ENCODE measurements at regions of chr5 and their contacts with region 1.

Region 1: DNA sequence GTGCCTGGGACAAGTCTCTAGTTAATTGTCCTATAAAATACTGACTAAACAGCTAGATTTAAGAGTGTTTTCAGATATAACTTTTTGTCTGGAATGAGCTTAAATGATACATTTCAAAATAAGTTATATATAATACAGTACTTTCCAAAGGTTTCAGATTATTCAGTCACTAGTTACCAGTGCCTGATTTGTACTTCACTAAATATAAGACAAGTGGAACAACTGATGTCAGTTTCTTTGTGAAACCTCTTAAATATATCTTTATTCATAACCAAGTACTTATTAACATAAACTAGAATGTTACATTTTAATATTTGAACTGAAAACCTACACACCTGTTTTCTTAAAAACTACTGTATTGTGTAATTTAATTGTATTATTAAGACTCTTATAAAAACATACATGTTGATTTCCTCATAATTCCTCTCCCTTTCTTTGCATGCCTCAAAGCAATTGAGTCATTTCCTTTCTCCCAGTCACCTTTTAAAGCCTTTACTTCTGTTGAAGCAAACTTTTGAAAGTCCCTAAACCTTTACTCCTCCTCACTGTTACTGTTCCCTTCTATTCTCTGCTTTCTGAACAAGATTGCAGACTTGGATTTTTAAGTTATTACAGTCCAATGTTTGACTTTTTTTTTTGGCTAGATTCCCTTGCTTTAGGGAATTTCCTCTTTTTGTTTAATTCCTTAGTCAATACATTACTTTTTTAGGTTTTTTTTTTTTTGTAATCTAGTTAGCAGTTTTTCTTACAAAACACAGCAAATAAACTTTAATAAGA is 8.7 kb upstream of the SEMA6A start:
- DNase-seq: no peak
- ATAC-seq: no peak
- H3K4me3 ChIP-seq: no peak overlapping the region
- H3K27ac ChIP-seq: peak overlapping the region in 2 of 4 donors; percentile 17 to 23
- H3K4me1 ChIP-seq: peaks cover 0 to 2% (median 0%) of the 10 kb centered on the region in 3 donors
- H3K27me3 ChIP-seq: no peaks in the 10 kb centered on the region
- CTCF ChIP-seq: no peak

Region 2: DNA sequence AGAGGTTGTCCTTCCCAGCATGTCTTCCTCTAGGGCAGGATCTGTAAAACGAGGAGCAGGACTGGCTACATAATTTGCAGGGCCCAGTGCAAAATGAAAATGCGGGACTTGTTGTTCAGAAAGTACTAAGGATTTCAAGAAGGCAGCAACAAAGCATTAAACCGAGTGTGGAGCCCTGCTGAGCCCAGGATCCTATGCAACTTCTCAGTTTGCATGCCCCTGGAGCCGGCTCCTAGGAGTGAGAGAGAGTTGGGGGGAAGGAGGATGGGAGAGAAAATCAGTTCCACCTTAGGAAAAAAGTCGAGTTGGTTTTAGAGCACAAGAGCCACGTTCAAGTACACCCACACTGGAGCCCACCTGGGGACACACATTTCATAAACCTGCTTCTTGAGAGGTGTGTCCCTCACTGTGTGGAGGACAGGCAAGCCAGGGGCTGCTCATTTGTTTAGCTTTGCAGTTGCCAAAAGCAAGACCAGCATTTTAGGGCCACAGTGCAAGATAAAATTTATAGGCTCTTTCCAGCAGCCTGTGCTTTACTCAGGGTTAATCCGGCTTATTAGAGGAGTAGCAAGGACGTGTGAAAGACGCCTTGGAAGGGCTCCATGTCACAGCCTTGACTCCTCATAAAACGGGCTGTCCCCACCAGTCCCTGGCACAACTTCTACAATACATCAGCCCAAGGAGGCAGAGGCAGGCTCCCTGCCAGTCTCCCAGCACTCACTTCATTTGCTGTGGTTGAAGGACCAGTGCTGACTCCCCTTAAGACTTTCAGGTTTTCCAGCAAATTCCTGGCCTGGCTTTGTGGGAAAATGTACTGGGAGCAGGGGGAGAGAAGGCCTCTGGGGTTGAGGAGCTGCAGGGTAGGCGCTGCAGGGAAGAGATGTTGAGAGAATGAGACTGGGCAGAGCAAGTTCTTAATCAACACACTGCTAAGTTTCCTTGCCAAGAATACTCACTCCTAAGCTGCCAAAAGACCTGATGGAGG is 151.0 kb after region 1 on chr5:
- intact Hi-C with region 1: no loop called
- DNase-seq: no peak
- ATAC-seq: no peak
- H3K4me3 ChIP-seq: no peak overlapping the region
- H3K27ac ChIP-seq: no peak overlapping the region
- H3K4me1 ChIP-seq: no peaks in the 10 kb centered on the region
- H3K27me3 ChIP-seq: no peaks in the 10 kb centered on the region
- CTCF ChIP-seq: no peak

Region 3: GRCh38 chr5:116814626-116815385 is 231.5 kb after region 1 on chr5:
- intact Hi-C with region 1: no loop called
- DNase-seq: no peak
- ATAC-seq: peak in 1 of 4 donors; percentile 46
- H3K4me3 ChIP-seq: no peak overlapping the region
- H3K27ac ChIP-seq: no peak overlapping the region
- H3K4me1 ChIP-seq: no peaks in the 10 kb centered on the region
- H3K27me3 ChIP-seq: no peaks in the 10 kb centered on the region
- CTCF ChIP-seq: no peak

Region 4: DNA sequence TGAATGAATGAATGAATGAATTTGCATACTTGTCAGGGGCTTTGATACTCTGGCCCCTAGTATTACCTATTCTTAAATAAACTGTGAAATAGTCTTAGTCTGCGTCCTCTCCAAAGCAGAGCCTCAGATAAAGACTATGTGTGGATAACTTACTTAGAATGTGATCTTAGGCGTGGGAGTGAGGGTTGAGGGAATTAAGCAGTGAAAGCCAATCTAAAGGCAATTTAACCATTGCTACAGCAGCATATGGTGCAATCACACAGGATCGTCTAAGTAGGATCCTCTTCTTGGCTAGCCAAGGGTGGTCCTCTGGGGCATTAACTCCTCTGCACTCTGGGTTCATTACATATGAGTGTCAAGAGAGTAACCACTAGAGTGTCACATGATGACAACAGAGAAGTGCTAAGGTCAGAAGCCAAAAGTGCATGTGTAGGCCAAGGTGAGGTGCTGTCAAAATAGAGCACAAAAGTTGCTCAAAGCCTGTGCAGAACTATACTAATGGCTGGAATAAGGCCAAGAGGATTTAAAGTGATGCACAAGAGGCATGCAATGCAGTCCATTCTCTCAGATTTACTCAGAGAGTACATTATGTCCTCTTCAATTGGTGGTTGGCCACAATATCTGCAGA is 265.8 kb after region 1 on chr5:
- intact Hi-C with region 1: no loop called
- DNase-seq: no peak
- ATAC-seq: no peak
- H3K4me3 ChIP-seq: no peak overlapping the region
- H3K27ac ChIP-seq: no peak overlapping the region
- H3K4me1 ChIP-seq: no peaks in the 10 kb centered on the region
- H3K27me3 ChIP-seq: no peaks in the 10 kb centered on the region
- CTCF ChIP-seq: no peak

Region 5: DNA sequence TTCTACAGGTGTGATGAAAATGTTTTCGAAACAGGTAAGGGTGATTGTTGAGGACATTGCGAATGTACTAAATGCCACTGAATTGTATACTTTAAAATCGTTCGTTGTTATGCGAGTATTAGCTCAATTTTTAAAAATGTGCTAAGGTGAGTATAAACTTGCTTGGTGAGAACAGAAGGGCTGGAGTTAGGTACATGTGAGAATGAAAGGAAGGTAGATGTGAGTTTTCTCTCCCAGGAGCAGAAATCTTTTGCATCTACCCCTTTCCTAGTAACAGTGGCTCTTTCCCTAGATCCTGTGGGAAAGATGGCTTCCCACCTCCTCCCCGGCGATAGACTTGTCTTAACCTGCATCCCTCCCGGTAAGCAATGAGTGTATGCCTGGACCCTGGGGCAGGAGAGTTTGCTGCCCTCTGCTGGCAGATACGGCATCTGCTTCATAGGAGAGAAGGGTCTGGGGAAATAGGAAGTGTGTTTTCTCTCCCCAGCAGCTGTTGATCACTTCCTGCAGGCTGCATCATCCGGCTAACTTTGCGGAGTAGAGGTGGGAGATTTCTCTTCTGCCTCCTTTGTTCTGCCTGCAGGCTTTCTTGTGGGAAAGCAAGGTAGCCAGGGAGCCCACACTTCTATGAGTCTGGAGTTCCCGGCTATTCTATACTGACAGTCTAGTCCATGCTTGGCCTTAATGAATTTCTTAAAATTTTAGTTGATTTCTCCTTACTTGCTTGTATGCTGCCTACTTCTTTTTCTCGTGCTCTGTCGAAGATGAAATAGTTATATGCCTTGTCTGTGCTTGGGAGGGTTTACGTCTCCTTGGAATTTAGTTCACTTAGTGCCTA is 364.6 kb after region 1 on chr5:
- intact Hi-C with region 1: loop called in 1 of 3 experiments (anchors 10 kb)
- DNase-seq: peak; percentile 50 to 88 (median 72)
- ATAC-seq: peak; percentile 91 to 98 (median 95)
- H3K4me3 ChIP-seq: no peak overlapping the region
- H3K27ac ChIP-seq: no peak overlapping the region
- H3K4me1 ChIP-seq: no peaks in the 10 kb centered on the region
- H3K27me3 ChIP-seq: no peaks in the 10 kb centered on the region
- CTCF ChIP-seq: peak; percentile 52 to 82 (median 66)